HepG2 (cell line): ENCODE measurements at regions of chr1 and their contacts with region 1.

Region 1: GRCh38 chr1:64242895-64243756 is 39.7 kb downstream of the UBE2U start:
- DNase-seq: peak; percentile 14
- ATAC-seq: no peak
- H3K4me3 ChIP-seq: no peak overlapping the region
- H3K27ac ChIP-seq: no peak overlapping the region
- H3K4me1 ChIP-seq: peaks cover 15% of the 10 kb centered on the region; the same call in 1 of the 2 replicates
- H3K27me3 ChIP-seq: peaks cover 0 to 2% of the 10 kb centered on the region in 2 experiments; a peak in 1 of 5 replicates
- CTCF ChIP-seq: peak; percentile 37
- EP300 ChIP-seq: no peak
- POLR2A ChIP-seq: no peak
- RAD21 ChIP-seq: no peak

Region 2: GRCh38 chr1:63557365-63557987 is 685.6 kb before region 1 on chr1:
- CTCF ChIA-PET with region 1: interaction called, 12 read pairs
- POLR2A ChIA-PET with region 1: no interaction called
- in situ Hi-C with region 1: no loop called
- intact Hi-C with region 1: loop called (anchors 1 kb)
- DNase-seq: peak; percentile 24
- ATAC-seq: peak; percentile 73
- H3K4me3 ChIP-seq: no peak overlapping the region
- H3K27ac ChIP-seq: no peak overlapping the region
- H3K4me1 ChIP-seq: no peaks in the 10 kb centered on the region
- H3K27me3 ChIP-seq: no peaks in the 10 kb centered on the region
- CTCF ChIP-seq: peak; percentile 62
- EP300 ChIP-seq: no peak
- POLR2A ChIP-seq: no peak
- RAD21 ChIP-seq: no peak

Region 3: GRCh38 chr1:63615768-63616420 is 627.2 kb before region 1 on chr1:
- CTCF ChIA-PET with region 1: interaction called, 12 read pairs
- POLR2A ChIA-PET with region 1: no interaction called
- in situ Hi-C with region 1: loop called (anchors 5 kb)
- intact Hi-C with region 1: loop called (anchors 1 kb)
- DNase-seq: peak; percentile 67
- ATAC-seq: peak; percentile 86
- H3K4me3 ChIP-seq: no peak overlapping the region
- H3K27ac ChIP-seq: no peak overlapping the region
- H3K4me1 ChIP-seq: peaks cover 62% of the 10 kb centered on the region
- H3K27me3 ChIP-seq: no peaks in the 10 kb centered on the region
- CTCF ChIP-seq: peak; percentile 77
- EP300 ChIP-seq: no peak
- POLR2A ChIP-seq: no peak
- RAD21 ChIP-seq: peak; percentile 51; the same call in 1 of the 2 replicates

Region 4: GRCh38 chr1:63691701-63692425 is 551.3 kb before region 1 on chr1:
- CTCF ChIA-PET with region 1: no interaction called
- POLR2A ChIA-PET with region 1: no interaction called
- in situ Hi-C with region 1: no loop called
- intact Hi-C with region 1: loop called (anchors 5 kb)
- DNase-seq: peak; percentile 71
- ATAC-seq: peak; percentile 93
- H3K4me3 ChIP-seq: no peak overlapping the region
- H3K27ac ChIP-seq: no peak overlapping the region
- H3K4me1 ChIP-seq: peaks cover 37% of the 10 kb centered on the region
- H3K27me3 ChIP-seq: no peaks in the 10 kb centered on the region
- CTCF ChIP-seq: peak; percentile 84
- EP300 ChIP-seq: no peak
- POLR2A ChIP-seq: no peak
- RAD21 ChIP-seq: peak; percentile 69

Region 5: DNA sequence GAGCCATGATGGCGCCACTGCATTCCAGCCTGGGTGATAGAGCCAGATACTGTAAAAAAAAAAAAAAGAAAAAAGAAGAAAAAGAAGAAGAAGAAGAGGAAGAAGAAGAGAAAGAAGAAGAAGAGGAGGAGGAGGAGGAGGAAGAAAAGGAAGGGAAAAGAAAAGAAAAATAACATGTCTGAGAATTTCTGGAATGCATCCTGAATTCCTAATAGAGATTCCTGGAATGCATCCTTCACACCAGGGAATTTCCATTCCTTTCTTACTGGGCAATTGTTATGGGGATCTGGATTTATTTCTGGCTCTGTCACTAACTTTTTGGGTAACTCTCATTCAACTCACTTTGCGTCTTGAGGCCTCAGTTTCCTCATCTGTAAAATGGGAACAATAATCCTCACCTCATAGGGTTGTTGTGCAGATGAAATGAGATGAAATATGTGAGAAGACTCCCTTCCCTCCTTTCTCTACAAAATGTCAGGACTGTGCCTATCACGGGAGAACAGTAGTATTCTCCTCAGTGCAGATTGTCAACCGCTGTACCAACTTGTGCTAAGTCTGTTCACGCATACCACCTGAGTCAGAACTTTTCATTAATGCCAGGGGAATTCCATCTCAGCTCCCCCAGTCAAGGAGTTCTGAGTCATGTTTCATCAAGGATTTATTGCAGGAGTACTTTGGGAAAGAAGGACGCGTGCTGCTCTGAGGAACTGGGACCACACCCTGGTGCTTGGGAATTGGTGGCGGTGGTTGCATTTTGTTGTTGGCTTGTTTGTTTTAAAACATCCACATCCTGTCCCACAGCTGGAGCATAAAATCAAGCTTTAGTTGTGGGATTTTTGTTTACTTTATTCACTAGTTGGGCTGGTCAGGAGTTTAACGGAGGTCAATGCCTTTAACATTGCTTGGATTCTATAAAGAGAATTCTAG is 511.7 kb before region 1 on chr1:
- CTCF ChIA-PET with region 1: no interaction called
- POLR2A ChIA-PET with region 1: no interaction called
- in situ Hi-C with region 1: no loop called
- intact Hi-C with region 1: no loop called
- DNase-seq: no peak
- ATAC-seq: no peak
- H3K4me3 ChIP-seq: no peak overlapping the region
- H3K27ac ChIP-seq: no peak overlapping the region
- H3K4me1 ChIP-seq: no peaks in the 10 kb centered on the region
- H3K27me3 ChIP-seq: peaks cover 1 to 6% of the 10 kb centered on the region in 2 experiments; a peak in 4 of 5 replicates
- CTCF ChIP-seq: no peak
- EP300 ChIP-seq: no peak
- POLR2A ChIP-seq: no peak
- RAD21 ChIP-seq: no peak

Region 6: GRCh38 chr1:63917571-63918417 is 325.3 kb before region 1 on chr1:
- CTCF ChIA-PET with region 1: no interaction called
- POLR2A ChIA-PET with region 1: no interaction called
- in situ Hi-C with region 1: no loop called
- intact Hi-C with region 1: loop called (anchors 10 kb)
- DNase-seq: peak; percentile 4
- ATAC-seq: peak; percentile 51; the same call in 2 of the 3 replicates
- H3K4me3 ChIP-seq: no peak overlapping the region
- H3K27ac ChIP-seq: no peak overlapping the region
- H3K4me1 ChIP-seq: peaks cover 13% of the 10 kb centered on the region
- H3K27me3 ChIP-seq: no peaks in the 10 kb centered on the region
- CTCF ChIP-seq: peak; percentile 48
- EP300 ChIP-seq: no peak
- POLR2A ChIP-seq: no peak
- RAD21 ChIP-seq: no peak